Lower leg skin (tissue), 4 donors: ENCODE measurements at regions of chr14 and their contacts with region 1.

Region 1: GRCh38 chr14:39169541-39169900 is 612 bp downstream of the TRAPPC6B start:
- DNase-seq: no peak
- H3K4me3 ChIP-seq: peak overlapping the region; percentile 87
- CTCF ChIP-seq: no peak
- POLR2A ChIP-seq: no peak

Region 2: DNA sequence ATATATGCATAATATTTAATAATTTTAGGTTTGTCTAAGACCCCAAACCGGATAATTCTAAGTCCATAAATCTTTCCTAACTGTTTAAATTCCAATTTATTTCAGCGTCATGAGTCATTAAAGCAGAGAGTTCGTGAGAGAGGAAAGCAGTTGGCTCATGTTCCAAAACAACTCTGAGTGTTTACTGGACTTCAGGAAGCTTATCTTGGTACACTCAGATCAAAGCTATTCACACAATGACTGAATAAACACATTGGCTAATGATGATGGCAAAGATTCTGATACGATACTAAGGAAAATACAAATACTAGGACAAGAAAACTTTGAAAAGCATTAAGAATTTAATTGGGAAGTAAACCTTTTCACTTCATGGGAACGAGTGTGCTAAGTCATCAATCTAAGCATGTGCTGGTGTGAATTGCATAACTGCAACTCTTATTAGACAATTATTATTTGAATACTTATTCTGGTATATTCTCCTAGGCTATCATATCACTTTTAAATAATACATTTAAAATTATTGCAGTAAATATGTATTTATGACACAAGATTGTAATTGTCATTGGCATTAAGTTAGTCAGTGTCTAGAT is 878.8 kb before region 1 on chr14:
- intact Hi-C with region 1: no loop called
- DNase-seq: no peak
- H3K4me3 ChIP-seq: no peak overlapping the region
- CTCF ChIP-seq: no peak
- POLR2A ChIP-seq: no peak

Region 3: GRCh38 chr14:39426605-39427004 is 257.1 kb after region 1 on chr14:
- intact Hi-C with region 1: loop called (anchors 5 kb)
- DNase-seq: no peak
- H3K4me3 ChIP-seq: no peak overlapping the region
- CTCF ChIP-seq: no peak
- POLR2A ChIP-seq: no peak